ENCODE measurements at regions of chr2 and their contacts with region 1.

Region 1: GRCh38 chr2:24971536-24972314 is at the start of gene DNAJC27:
- DNase-seq: peak; percentile 92 to 99 (median 98)
- ATAC-seq: peak; percentile 87
- H3K4me3 ChIP-seq: peak within 1 kb of the TSS; percentile 68 to 98
- H3K4me3 Mint-ChIP-seq: peak within 1 kb of the TSS; percentile 96
- H3K27ac ChIP-seq: peak within 1 kb of the TSS; percentile 93 to 100
- H3K27ac Mint-ChIP-seq: peak within 1 kb of the TSS; percentile 100
- H3K4me1 ChIP-seq: peaks cover 17% of the 10 kb centered on the region
- H3K4me1 Mint-ChIP-seq: peaks cover 27% of the 10 kb centered on the region
- H3K27me3 ChIP-seq: no peaks in the 10 kb centered on the region
- H3K27me3 Mint-ChIP-seq: no peaks in the 10 kb centered on the region
- CTCF ChIP-seq: no peak
- total RNA-seq, gene DNAJC27: 18.9 to 19.1 TPM

Region 2: DNA sequence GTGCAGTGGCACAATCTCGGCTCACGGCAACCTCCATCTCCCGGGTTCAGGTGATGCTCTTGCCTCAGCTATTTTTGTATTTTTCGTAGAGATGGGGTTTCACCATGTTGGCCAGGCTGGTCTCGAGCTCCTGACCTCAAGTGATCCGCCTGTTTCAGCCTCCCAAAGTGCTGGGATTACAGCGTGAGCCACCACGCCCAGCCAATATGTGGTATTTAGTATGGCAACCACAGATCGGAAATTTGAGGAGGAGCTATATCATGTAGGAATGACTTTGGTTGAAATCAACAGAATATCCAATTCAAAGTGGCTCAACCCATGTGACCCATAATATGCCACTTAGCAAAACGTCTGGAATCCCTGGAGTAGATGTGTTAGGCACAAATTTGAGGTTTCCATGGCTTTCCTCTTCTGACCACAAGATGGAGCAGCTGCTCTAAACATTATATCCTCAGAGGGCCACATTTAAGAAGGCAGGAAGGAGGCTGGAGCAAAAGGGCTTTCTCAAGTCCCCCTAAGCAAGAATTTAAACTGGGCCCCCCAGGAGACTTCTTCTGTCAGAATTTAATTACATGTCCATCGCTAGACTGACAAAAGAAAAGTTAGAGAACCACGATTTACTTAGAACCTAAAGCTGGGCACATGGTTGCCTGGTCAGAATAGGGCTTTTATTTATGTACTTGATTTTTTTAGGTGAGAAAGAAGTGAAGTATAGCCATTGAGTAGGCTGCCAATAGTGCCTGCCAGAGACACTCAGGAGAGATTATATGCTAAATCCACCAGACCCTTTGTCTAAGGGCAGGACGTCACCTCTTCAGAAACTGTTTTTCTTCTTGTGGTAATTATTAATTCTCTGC is 561.8 kb before region 1 on chr2:
- CTCF ChIA-PET with region 1: interaction called, 3 read pairs
- POLR2A ChIA-PET with region 1: no interaction called
- intact Hi-C with region 1: loop called in 1 of 2 experiments (anchors 5 kb)
- DNase-seq: peak in 8 of 9 experiments; percentile 2 to 79 (median 33)
- ATAC-seq: peak; percentile 71
- H3K4me3 ChIP-seq: no peak overlapping the region
- H3K4me3 Mint-ChIP-seq: no peak overlapping the region
- H3K27ac ChIP-seq: no peak overlapping the region
- H3K27ac Mint-ChIP-seq: no peak overlapping the region
- H3K4me1 ChIP-seq: no peaks in the 10 kb centered on the region
- H3K4me1 Mint-ChIP-seq: no peaks in the 10 kb centered on the region
- H3K27me3 ChIP-seq: peaks cover 0 to 5% of the 10 kb centered on the region in 2 experiments
- H3K27me3 Mint-ChIP-seq: peaks cover 12% of the 10 kb centered on the region
- CTCF ChIP-seq: peak; percentile 88

Region 3: DNA sequence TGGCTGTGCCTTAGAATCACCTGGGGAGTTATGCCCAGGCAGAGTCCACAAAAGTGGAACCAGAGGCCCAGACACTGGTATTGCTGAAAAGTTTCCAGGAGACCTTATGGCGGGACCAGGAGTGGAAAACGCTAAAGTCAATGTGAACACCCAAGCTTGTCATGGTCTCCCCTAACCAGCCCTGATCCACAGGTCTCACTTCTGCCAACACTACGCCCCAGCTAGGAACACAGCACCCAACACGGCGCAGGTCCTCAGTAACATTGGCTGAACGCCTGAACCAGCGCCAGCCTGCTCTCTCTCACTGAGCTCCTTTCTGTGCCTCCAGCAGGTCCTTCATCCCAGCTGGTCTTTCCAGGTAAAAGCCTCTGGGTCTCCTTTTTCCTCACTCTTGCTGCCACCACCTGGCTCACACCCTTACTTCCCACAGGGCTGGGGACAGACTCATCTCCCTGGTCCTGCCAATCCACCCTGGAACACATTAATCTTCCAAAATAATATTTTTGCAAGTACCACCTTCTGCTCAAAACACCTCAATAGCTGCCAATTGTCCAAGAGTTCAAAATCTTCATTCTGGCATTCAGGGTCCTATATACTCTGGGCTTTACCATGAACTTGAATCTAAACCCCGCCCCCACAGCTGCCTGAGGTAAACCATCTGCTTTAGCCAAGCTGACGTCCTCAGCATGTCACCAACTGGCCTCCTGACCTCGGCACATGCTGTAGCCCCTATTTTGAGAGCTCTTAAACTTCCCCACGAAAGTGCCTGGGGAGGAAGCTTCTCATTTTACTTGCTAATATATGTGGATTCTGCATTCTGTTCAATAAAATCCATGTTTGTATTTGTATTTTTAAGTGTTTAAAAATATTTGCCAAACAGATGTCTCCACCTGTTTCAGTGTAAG is 86.3 kb before region 1 on chr2:
- CTCF ChIA-PET with region 1: no interaction called
- POLR2A ChIA-PET with region 1: no interaction called
- intact Hi-C with region 1: no loop called
- DNase-seq: no peak
- ATAC-seq: no peak
- H3K4me3 ChIP-seq: no peak overlapping the region
- H3K4me3 Mint-ChIP-seq: no peak overlapping the region
- H3K27ac ChIP-seq: no peak overlapping the region
- H3K27ac Mint-ChIP-seq: no peak overlapping the region
- H3K4me1 ChIP-seq: no peaks in the 10 kb centered on the region
- H3K4me1 Mint-ChIP-seq: peaks cover 2% of the 10 kb centered on the region
- H3K27me3 ChIP-seq: no peaks in the 10 kb centered on the region
- H3K27me3 Mint-ChIP-seq: no peaks in the 10 kb centered on the region
- CTCF ChIP-seq: no peak

Region 4: DNA sequence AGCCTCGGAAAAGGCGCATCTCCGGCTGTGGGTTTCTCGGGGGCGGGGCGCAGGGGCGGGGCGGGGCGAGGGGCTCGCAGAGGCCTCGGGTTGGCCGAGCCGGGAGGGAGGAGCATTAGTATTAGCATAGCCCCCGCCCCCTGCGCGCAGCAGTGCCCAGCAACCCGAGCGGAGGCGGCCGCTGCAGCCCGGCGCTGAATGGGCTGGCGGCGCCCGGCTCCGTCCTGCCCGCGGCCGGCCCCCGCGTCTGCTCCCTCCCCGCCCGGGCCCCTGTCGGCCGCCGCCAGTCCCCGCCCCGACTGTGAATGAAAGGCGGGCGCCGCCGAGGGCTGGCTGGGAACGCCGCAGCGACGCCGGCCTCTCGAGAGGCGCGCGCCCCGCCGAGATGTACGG is 70.2 kb after region 1 on chr2 and contains the start of gene EFR3B:
- CTCF ChIA-PET with region 1: interaction called, 3 read pairs
- POLR2A ChIA-PET with region 1: no interaction called
- intact Hi-C with region 1: loop called (anchors 1 to 2 kb)
- DNase-seq: peak; percentile 70 to 95 (median 88)
- ATAC-seq: peak; percentile 95
- H3K4me3 ChIP-seq: peak within 1 kb of the TSS; percentile 48 to 72
- H3K4me3 Mint-ChIP-seq: peak within 1 kb of the TSS; percentile 90
- H3K27ac ChIP-seq: no peak within 1 kb of the TSS
- H3K27ac Mint-ChIP-seq: peak within 1 kb of the TSS; percentile 6
- H3K4me1 ChIP-seq: peaks cover 17% of the 10 kb centered on the region
- H3K4me1 Mint-ChIP-seq: peaks cover 21% of the 10 kb centered on the region
- H3K27me3 ChIP-seq: peaks cover 3 to 16% of the 10 kb centered on the region in 2 experiments
- H3K27me3 Mint-ChIP-seq: peaks cover 35% of the 10 kb centered on the region
- CTCF ChIP-seq: no peak
- total RNA-seq, gene EFR3B: 0.08 TPM in 1 of 2 experiments, not detected in the other

Region 5: GRCh38 chr2:25342372-25343186 is 370.9 kb after region 1 on chr2:
- CTCF ChIA-PET with region 1: no interaction called
- POLR2A ChIA-PET with region 1: no interaction called
- intact Hi-C with region 1: loop called in 1 of 2 experiments (anchors 10 kb)
- DNase-seq: peak; percentile 62 to 91 (median 80)
- ATAC-seq: peak; percentile 85
- H3K4me3 ChIP-seq: peak overlapping the region; percentile 22 to 53
- H3K4me3 Mint-ChIP-seq: peak overlapping the region; percentile 85
- H3K27ac ChIP-seq: no peak overlapping the region
- H3K27ac Mint-ChIP-seq: peak overlapping the region; percentile 77
- H3K4me1 ChIP-seq: peaks cover 42% of the 10 kb centered on the region
- H3K4me1 Mint-ChIP-seq: peaks cover 33% of the 10 kb centered on the region
- H3K27me3 ChIP-seq: no peaks in the 10 kb centered on the region
- H3K27me3 Mint-ChIP-seq: no peaks in the 10 kb centered on the region
- CTCF ChIP-seq: peak; percentile 87

Region 6: GRCh38 chr2:25673300-25674076 is 701.8 kb after region 1 on chr2 and contains the start of gene DTNB:
- CTCF ChIA-PET with region 1: no interaction called
- POLR2A ChIA-PET with region 1: no interaction called
- intact Hi-C with region 1: loop called (anchors 2 to 5 kb)
- DNase-seq: peak; percentile 52 to 91 (median 77)
- ATAC-seq: peak; percentile 73
- H3K4me3 ChIP-seq: peak within 1 kb of the TSS; percentile 75 to 76
- H3K4me3 Mint-ChIP-seq: peak within 1 kb of the TSS; percentile 88
- H3K27ac ChIP-seq: peak within 1 kb of the TSS; percentile 62 to 70
- H3K27ac Mint-ChIP-seq: peak within 1 kb of the TSS; percentile 83
- H3K4me1 ChIP-seq: peaks cover 15% of the 10 kb centered on the region
- H3K4me1 Mint-ChIP-seq: peaks cover 33% of the 10 kb centered on the region
- H3K27me3 ChIP-seq: no peaks in the 10 kb centered on the region
- H3K27me3 Mint-ChIP-seq: no peaks in the 10 kb centered on the region
- CTCF ChIP-seq: no peak
- total RNA-seq, gene DTNB: 27.1 to 33.2 TPM